OCI-LY7 (cell line): ENCODE measurements at regions of chr14 and their contacts with region 1.

Region 1: DNA sequence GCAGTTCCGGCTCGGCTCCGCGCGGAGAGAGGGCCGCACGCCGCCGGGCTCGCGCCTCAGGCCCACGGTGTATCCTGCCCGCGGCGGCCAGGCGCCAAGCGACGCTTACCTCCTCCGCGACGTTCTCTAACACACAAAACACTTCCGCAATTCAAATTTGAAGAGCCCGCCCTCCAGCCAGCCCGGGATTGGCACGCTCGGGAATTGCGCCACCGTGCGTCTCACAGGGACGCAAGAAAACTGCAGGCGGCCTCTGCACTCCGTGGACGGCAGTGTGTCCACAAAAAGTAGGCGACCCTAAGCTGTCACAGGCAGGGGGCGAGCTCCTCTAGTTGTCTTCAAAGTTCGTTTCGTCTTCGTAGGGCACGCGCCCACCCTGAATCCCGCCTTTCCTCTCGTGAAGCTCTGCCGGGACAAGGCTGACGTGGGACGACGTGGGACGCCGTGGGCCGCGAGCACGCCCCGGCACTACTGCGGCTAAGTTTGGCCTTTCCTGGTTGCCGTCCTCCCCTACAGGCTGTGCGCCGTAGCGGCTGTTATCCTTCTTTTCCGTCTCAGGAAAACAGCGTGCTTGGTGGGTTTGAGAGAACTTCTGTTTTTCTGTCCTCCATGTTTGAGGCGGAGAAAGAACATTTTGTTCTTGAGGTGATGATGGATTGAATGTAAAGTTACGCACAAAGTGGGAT is at the start of gene MIS18BP1:
- DNase-seq: peak; percentile 98
- H3K4me3 ChIP-seq: peak within 1 kb of the TSS; percentile 78
- H3K27ac ChIP-seq: peak within 1 kb of the TSS; percentile 88
- H3K4me1 ChIP-seq: peaks cover 26% of the 10 kb centered on the region
- CTCF ChIP-seq: peak; percentile 84
- total RNA-seq, gene MIS18BP1: 99.2 and 116 TPM in 2 replicates

Region 2: DNA sequence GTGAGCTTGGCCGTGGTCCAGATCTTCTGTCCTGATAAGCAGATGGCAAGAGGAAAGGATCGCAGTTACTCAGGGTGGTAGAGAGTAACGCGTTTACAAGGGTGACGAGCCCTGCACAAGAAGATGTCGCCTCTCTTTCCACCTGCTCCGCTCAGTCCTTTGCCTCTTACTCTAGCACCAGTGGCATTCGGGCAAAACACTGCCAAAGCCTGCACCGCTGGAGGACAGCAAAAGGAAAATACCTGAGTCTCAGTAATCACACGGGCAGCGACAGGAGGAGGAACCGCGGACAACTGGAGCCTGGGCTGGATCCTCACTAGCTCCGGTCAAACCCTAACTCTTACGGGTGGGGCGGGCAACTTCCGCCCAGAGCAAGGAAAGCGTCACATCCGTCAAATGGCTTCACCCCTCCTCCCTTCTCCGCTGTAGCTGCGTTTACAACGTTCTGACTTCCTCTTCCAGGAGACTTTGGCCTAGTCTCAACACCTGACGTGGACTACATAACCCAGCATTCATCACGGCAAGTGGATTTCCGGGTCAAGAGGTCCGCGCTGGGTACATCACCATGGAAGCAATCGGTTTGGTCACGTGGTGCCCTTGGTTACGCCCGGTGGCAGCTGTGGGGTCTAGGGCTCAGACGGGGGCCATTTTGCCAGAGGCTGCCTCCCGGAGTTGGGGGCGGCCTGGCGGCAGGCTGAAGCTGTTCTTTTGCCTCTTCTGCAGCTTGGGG is 291.4 kb before region 1 on chr14 and contains the starts of genes KLHL28 and TOGARAM1:
- CTCF ChIA-PET with region 1: no interaction called
- POLR2A ChIA-PET with region 1: interaction called, 3 read pairs
- intact Hi-C with region 1: loop called (anchors 2 kb)
- DNase-seq: peak; percentile 99
- H3K4me3 ChIP-seq: peak within 1 kb of the TSS; percentile 86
- H3K27ac ChIP-seq: peak within 1 kb of the TSS; percentile 75
- H3K4me1 ChIP-seq: peaks cover 22% of the 10 kb centered on the region
- CTCF ChIP-seq: no peak
- total RNA-seq, gene KLHL28: 3.7 and 10.6 TPM in 2 replicates
- total RNA-seq, gene TOGARAM1: 11.4 and 12.4 TPM in 2 replicates

Region 3: DNA sequence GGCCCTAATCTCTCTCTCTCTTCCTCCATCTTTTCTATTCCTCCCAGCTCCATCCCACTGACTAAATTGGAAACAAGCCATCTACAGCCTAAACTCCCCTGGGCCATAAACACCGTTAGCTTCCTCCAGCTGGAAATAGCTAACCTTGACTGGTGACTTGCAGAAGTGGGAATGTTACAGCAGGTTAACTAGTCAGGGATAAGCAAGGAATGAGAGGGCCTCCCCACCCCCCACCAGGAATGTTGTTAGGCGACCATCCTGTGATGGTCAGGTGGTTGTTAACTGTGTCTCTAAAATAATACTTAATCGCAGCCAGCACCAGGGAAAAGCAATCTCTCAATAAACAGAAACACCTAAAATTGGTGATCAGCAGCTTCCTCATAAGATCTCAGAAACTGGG is 41.0 kb before region 1 on chr14:
- CTCF ChIA-PET with region 1: no interaction called
- POLR2A ChIA-PET with region 1: no interaction called
- intact Hi-C with region 1: no loop called
- DNase-seq: no peak
- H3K4me3 ChIP-seq: no peak overlapping the region
- H3K27ac ChIP-seq: no peak overlapping the region
- H3K4me1 ChIP-seq: no peaks in the 10 kb centered on the region
- CTCF ChIP-seq: no peak